Activated T-helper 1 cell treated with anti-CD3 and anti-CD28 coated beads, Interleukin-12 subunit alpha, Interleukin-12 subunit beta, Interleukin-2, Interleukin-4 antibody, amounts not matched to agents 30 ng/mL and 10 ng/mL and 1 ng/mL, durations not matched to agents 14 hours and 24 hours and 36 hours (primary cell): ENCODE measurements at regions of chr2 and their contacts with region 1.

Region 1: DNA sequence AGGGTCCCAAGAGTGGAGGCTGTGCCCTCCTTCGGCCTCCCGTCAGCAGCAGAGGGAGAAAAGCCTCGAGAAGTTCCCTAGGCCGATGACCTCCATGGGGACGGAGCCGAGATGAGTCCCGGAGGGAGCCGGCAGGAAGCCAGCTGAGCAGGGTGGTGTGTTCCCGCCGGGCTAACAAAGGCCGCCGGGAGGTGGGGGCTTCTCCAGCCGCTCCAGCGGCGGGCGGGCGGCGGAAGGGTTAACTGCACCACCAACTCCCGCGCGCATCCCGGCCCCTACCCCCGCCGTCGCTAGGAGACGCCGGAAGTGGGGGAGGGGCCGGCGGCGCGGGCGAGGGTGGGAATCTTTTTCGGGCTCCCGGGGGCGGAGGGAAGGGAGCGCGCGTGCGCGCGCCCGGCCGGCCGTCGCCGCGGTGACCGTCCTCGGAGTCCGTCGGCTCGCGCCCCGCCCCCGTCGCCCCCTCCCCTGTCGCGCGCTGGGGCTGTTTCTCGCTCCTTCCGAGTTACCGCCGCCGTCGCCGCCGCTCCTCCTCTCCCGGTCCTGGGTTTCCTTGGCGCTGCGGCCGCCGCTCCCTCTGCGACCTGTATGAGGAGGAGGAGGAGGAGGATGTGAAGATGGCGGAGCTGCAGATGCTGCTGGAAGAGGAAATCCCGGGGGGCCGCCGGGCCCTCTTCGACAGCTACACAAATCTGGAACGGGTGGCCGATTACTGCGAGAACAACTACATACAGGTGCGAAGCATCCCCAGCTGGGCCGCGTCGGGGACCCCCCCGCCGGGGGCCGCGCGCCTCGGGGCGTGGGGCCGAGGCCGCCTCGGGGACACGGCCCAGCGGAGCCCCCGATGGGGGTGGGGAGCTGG is at the start of gene ABI2:
- DNase-seq: peak; percentile 60
- H3K4me3 Mint-ChIP-seq: peak within 1 kb of the TSS; percentile 94
- H3K27ac Mint-ChIP-seq: peak within 1 kb of the TSS; percentile 91
- H3K4me1 Mint-ChIP-seq: peaks cover 34% of the 10 kb centered on the region
- H3K27me3 Mint-ChIP-seq: no peaks in the 10 kb centered on the region
- total RNA-seq, gene ABI2: 31.4 and 32.3 TPM in 2 replicates

Region 2: GRCh38 chr2:202848813-202849212 is 479.3 kb before region 1 on chr2:
- intact Hi-C with region 1: no loop called
- DNase-seq: no peak
- H3K4me3 Mint-ChIP-seq: no peak overlapping the region
- H3K27ac Mint-ChIP-seq: no peak overlapping the region
- H3K4me1 Mint-ChIP-seq: no peaks in the 10 kb centered on the region
- H3K27me3 Mint-ChIP-seq: no peaks in the 10 kb centered on the region

Region 3: DNA sequence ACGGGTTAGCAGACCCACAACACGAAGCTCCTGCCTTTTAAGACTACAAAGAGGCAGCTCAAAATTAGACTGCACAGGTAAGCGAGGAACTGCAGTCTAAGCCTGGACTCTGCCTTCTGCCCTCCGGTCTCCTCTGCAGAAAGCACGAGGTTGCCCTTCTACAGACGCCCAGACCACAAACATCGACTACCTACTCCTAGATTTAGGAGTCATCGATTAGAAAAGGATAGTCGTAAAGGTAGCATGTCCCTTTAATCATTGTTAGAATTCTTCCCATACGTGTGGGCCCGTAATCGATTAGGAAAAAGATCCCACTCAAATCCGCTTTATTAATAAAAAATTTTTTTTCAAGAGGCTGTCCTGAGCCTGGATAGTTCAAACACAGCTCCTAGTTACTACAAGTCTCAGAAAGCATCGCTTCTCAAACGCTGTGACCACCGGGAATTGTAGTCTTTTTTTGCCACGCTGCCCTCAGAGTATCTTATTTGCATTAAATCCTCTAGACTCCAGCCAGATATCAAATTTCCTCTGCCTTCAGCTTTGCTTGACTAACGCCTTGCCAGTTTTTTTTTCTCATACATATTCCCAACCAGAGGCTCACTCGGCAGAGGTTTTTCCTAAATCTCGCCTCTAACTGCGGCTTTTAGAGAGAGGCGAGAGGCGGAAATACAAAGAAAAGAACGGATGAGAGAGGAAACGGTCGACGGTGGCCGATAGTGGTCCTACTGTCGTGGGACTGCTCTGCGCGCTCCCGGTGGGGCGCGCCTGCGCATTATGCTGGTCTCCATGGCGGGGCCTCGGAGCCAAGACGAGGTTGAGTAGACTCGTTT is 416.4 kb before region 1 on chr2 and contains the starts of genes CARF and WDR12:
- intact Hi-C with region 1: loop called (anchors 1 kb)
- DNase-seq: peak; percentile 87
- H3K4me3 Mint-ChIP-seq: peak within 1 kb of the TSS; percentile 96
- H3K27ac Mint-ChIP-seq: peak within 1 kb of the TSS; percentile 98
- H3K4me1 Mint-ChIP-seq: peaks cover 31% of the 10 kb centered on the region
- H3K27me3 Mint-ChIP-seq: no peaks in the 10 kb centered on the region
- total RNA-seq, gene CARF: 3.6 and 4.3 TPM in 2 replicates
- total RNA-seq, gene WDR12: 149 and 165 TPM in 2 replicates

Region 4: GRCh38 chr2:203551778-203552177 is 223.6 kb after region 1 on chr2:
- intact Hi-C with region 1: no loop called
- DNase-seq: no peak
- H3K4me3 Mint-ChIP-seq: no peak overlapping the region
- H3K27ac Mint-ChIP-seq: no peak overlapping the region
- H3K4me1 Mint-ChIP-seq: peaks cover 14% of the 10 kb centered on the region
- H3K27me3 Mint-ChIP-seq: peaks cover 8% of the 10 kb centered on the region